Activated CD4-positive, alpha-beta T cell treated with anti-CD3 and anti-CD28 coated beads for 36 hours (primary cell): ENCODE measurements at regions of chr20 and their contacts with region 1.

Region 1: DNA sequence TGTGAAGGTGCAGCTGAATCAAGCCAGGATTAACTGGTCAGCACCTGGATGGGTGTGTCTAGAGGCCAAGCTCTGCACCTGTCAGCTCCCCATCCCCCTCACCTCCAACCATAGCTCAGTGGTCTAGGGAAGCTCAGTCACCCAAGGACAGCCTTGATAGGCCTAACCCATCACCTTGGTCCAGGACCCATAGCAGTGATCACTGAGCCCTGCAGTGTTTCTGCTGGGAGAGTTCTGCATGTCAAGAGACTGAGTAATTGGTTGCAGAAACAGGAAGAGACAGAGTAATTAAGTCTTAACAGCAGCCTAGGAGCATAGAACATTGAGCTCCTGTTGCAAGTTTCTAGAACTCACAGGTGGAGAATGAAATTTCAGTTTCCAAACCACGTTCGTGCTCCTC is 18.7 kb upstream of the RALGAPB start:
- DNase-seq: no peak
- ATAC-seq: no peak
- H3K4me3 Mint-ChIP-seq: no peak overlapping the region
- H3K27ac Mint-ChIP-seq: no peak overlapping the region
- H3K4me1 Mint-ChIP-seq: peaks cover 7% of the 10 kb centered on the region
- H3K27me3 Mint-ChIP-seq: no peaks in the 10 kb centered on the region

Region 2: DNA sequence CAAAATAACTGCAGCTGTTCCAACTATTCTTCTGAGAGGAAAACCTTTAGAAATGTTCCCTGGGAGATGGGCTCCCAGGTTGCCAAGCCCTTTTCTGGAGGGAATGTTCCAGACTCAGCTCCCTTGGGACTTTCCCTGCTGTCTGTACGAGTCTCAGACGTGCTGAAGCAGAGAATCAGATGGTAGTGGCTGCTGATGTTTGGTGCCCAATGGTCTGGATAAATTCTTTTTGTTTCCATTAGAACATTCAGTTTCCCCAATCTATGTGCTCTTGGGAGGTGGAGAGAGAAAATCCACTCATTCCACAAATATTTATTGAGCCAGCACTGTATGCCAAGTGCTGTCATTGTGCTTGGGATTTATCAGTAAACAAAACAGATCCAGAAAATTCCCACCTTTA is 58.8 kb before region 1 on chr20:
- CTCF ChIA-PET with region 1: no interaction called
- POLR2A ChIA-PET with region 1: no interaction called
- intact Hi-C with region 1: loop called in 1 of 2 experiments (anchors 10 kb)
- DNase-seq: no peak
- ATAC-seq: no peak
- H3K4me3 Mint-ChIP-seq: no peak overlapping the region
- H3K27ac Mint-ChIP-seq: no peak overlapping the region
- H3K4me1 Mint-ChIP-seq: no peaks in the 10 kb centered on the region
- H3K27me3 Mint-ChIP-seq: no peaks in the 10 kb centered on the region

Region 3: DNA sequence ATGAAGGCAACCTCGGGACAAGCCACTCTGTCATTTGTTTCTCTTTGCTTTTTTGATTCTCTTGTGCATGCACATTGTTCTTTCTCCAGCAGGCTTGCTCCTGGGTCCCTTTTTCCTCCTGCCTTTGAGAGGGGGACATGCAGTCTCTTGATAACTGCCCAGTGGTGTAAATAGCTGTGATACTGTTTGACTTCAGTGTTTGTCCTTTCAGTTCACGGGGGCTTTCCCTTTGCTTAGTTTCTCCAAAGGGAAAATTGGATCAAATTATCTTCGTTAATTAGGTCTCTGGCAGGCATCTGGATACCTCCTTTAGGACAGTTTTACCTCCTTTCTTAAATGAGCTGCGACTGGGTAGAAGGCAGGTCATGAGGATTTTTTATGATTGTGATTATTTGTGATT is 60.2 kb after region 1 on chr20:
- CTCF ChIA-PET with region 1: no interaction called
- POLR2A ChIA-PET with region 1: no interaction called
- intact Hi-C with region 1: loop called in 1 of 2 experiments (anchors 10 kb)
- DNase-seq: no peak
- ATAC-seq: no peak
- H3K4me3 Mint-ChIP-seq: no peak overlapping the region
- H3K27ac Mint-ChIP-seq: no peak overlapping the region
- H3K4me1 Mint-ChIP-seq: no peaks in the 10 kb centered on the region
- H3K27me3 Mint-ChIP-seq: no peaks in the 10 kb centered on the region